Heart right ventricle (tissue), 16 donors: ENCODE measurements at regions of chr3 and their contacts with region 1.

Region 1: GRCh38 chr3:125367403-125368230 is 7.5 kb downstream of the ZNF148 start:
- DNase-seq: no peak
- ATAC-seq: peak in 1 of 8 donors; percentile 55
- H3K4me3 ChIP-seq: no peak overlapping the region
- H3K27ac ChIP-seq: peak overlapping the region in 8 of 10 donors; percentile 2 to 58 (median 15)
- H3K4me1 ChIP-seq: peaks cover 0 to 65% (median 28%) of the 10 kb centered on the region in 9 donors
- H3K27me3 ChIP-seq: no peaks in the 10 kb centered on the region
- CTCF ChIP-seq: no peak

Region 2: GRCh38 chr3:125271127-125271526 is 96.5 kb before region 1 on chr3:
- intact Hi-C with region 1: loop called in 1 of 10 experiments (anchors 10 kb)
- DNase-seq: no peak
- ATAC-seq: no peak
- H3K4me3 ChIP-seq: no peak overlapping the region
- H3K27ac ChIP-seq: no peak overlapping the region
- H3K4me1 ChIP-seq: peaks cover 0 to 12% (median 0%) of the 10 kb centered on the region in 9 donors
- H3K27me3 ChIP-seq: no peaks in the 10 kb centered on the region
- CTCF ChIP-seq: no peak

Region 3: GRCh38 chr3:125443923-125444322 is 76.3 kb after region 1 on chr3:
- intact Hi-C with region 1: no loop called
- DNase-seq: no peak
- ATAC-seq: no peak
- H3K4me3 ChIP-seq: no peak overlapping the region
- H3K27ac ChIP-seq: no peak overlapping the region
- H3K4me1 ChIP-seq: peaks cover 0 to 4% (median 0%) of the 10 kb centered on the region in 9 donors
- H3K27me3 ChIP-seq: no peaks in the 10 kb centered on the region
- CTCF ChIP-seq: no peak